ENCODE measurements at regions of chr21 and their contacts with region 1.

Region 1: DNA sequence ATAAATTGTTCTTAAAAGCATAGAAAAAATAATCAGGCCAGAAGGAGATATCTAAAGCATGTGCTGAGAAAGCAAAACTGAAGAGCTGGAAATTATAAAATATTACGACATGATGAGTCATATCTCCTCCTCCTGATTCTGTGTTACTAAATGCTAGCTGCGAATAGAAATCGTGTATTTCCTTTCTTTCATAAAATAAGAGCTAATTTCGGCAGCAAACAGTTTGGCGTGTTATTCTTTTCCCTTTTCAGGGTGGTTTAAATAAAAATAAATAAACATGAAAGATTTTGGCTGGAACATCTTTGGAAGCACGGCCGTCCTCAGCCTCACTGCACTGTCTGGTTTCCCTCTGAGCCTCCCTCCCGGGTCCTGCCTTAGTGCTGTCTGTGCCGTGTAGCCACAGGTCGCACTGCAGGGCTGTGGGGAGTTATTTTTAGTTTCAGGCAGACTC is 56.0 kb downstream of the ADARB1 start:
- DNase-seq: peak in 2 of 3 donors; percentile 31 to 54
- H3K4me3 ChIP-seq: peak overlapping the region in 2 of 7 experiments; percentile 25 to 35
- H3K27ac ChIP-seq: no peak overlapping the region
- H3K4me1 ChIP-seq: peaks cover 4 to 28% (median 20%) of the 10 kb centered on the region in 4 experiments
- H3K27me3 ChIP-seq: peaks cover 0 to 1% (median 0%) of the 10 kb centered on the region in 5 experiments

Region 2: DNA sequence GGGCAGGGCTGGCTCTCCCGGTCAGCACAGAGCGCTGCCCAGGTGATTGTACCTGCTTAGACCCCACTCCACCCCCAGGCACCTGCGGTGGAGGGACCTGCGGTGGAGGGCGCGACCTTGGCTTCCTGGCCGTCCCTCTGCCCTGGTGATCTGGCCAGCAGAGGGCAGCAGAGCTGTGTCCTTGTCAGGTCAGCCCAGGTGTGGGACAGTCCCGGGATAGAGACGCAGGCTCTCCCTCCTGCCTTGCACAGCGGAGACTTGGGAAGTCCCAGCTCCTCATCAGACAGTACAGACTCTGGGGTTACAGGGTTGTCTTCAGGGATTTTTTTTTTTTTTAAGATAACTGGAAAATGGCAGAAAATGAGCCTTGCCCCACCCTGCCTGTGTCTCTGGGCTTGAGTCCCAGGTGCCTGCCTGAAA is 180.6 kb before region 1 on chr21:
- CTCF ChIA-PET with region 1: interaction called, 196 read pairs
- POLR2A ChIA-PET with region 1: no interaction called
- DNase-seq: peak; percentile 59 to 67 (median 64)
- H3K4me3 ChIP-seq: no peak overlapping the region
- H3K27ac ChIP-seq: no peak overlapping the region
- H3K4me1 ChIP-seq: peaks cover 0 to 17% (median 6%) of the 10 kb centered on the region in 4 experiments
- H3K27me3 ChIP-seq: no peaks in the 10 kb centered on the region

Region 3: DNA sequence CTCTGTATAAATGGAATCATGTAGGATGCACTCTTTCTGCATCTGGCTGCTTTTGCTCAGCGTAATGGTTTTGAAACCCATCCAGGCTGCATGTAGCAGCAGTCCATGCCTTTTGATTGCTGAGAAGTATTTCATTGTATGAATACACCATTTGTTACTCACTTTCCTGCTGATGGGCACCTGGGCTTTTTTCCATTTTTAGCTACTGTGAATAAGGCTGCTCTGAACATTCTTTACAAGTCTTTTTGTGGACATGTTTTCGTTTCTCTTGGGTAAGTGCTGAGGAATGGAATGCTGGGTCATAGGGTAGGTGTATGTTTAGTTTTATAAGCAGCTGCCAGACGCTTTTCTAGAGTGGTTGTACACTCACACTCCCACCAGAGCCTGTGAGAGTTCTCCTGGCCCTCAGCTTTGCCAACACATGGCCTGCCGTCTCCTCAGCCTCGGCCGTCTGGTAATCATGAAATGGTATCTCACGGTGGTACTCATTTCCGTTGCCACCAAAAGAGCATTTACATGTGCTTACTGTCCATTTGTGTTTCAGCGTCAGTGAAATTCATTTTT is 167.9 kb before region 1 on chr21:
- CTCF ChIA-PET with region 1: interaction called, 15 read pairs
- POLR2A ChIA-PET with region 1: no interaction called
- DNase-seq: no peak
- H3K4me3 ChIP-seq: no peak overlapping the region
- H3K27ac ChIP-seq: no peak overlapping the region
- H3K4me1 ChIP-seq: peaks cover 0 to 27% (median 25%) of the 10 kb centered on the region in 4 experiments
- H3K27me3 ChIP-seq: no peaks in the 10 kb centered on the region

Region 4: DNA sequence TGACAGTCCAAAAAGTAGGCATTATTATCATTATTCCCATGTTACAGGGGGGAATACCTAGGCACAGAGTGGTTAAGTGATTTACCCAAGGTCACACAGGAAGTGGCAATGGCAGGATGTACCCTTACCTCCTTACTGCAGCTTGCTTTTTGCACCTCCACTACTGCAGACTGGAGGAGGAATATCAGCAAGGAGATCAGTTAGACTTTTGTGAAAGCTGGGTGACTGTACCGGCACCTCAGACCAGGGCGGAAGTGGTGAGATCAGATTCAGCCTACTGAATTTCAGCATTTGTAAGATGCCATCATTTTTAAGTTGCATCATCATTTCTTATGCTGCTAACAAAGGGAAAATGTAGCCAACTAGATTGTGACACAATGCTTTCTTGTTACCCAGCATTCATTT is 51.5 kb before region 1 on chr21:
- CTCF ChIA-PET with region 1: interaction called, 18 read pairs
- POLR2A ChIA-PET with region 1: no interaction called
- DNase-seq: peak in 2 of 3 donors; percentile 35 to 47
- H3K4me3 ChIP-seq: no peak overlapping the region
- H3K27ac ChIP-seq: no peak overlapping the region
- H3K4me1 ChIP-seq: peaks cover 4 to 18% (median 10%) of the 10 kb centered on the region in 4 experiments
- H3K27me3 ChIP-seq: peaks cover 0 to 20% (median 12%) of the 10 kb centered on the region in 5 experiments

Region 5: DNA sequence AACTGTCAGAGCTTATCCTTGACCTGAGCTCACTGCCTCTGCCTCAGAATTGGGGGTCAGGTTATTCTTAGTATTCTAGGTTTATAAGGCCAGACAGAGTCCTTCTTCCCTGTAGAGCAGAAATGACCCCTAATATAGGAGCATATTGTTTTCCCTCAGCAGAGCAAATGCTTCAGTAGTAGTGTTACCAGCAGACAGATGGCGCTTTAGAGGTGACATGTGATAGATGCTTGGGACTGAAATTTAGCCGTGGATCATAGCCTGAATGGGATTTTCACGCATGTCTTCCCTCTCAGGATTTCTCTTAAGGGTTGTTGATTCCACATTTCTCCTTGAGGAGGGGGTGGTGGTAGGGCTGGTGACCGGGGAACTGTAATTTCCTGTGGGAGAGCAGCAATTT is 31.5 kb before region 1 on chr21:
- CTCF ChIA-PET with region 1: interaction called, 149 read pairs
- POLR2A ChIA-PET with region 1: no interaction called
- DNase-seq: peak in 1 of 3 donors; percentile 45
- H3K4me3 ChIP-seq: no peak overlapping the region
- H3K27ac ChIP-seq: no peak overlapping the region
- H3K4me1 ChIP-seq: peaks cover 0 to 6% (median under 1%) of the 10 kb centered on the region in 4 experiments
- H3K27me3 ChIP-seq: peaks cover 0 to 13% (median 2%) of the 10 kb centered on the region in 5 experiments

Region 6: DNA sequence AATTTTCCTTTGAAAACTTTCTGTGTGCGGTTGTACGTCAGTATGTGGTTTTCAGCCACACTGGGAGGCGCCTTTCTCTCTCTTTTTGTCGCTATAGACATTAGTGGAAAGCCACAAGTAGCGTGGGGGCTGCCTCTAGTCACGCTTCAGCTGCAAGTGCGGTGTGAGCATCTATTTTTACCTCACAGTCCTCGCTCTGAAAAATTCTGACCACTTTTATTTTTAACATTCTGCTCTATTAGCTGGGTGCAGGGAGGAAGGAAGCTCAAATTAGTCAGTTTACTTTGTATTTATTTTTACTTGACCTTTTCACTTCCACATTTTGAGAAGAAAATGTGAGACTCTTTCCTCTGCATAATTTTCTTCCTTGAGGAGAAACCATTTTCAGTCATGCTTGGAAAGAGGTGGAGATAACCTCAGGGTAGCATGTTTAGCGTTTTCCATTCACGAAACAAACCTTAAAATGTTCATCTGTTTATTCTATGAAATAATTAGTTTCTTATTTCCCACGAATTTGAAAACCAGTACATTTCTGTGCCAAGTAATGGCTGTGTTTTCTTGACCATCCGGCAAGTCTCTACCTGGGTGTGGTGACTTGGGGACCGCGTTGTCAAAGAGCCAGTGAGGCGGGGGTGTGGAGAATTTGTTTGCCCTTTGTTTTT is 20.4 kb before region 1 on chr21:
- CTCF ChIA-PET with region 1: interaction called, 34 read pairs
- POLR2A ChIA-PET with region 1: no interaction called
- DNase-seq: peak; percentile 68 to 81 (median 76)
- H3K4me3 ChIP-seq: peak overlapping the region in 6 of 7 experiments; percentile 42 to 69 (median 44)
- H3K27ac ChIP-seq: peak overlapping the region in 1 of 2 experiments; percentile 75
- H3K4me1 ChIP-seq: peaks cover 10 to 47% (median 32%) of the 10 kb centered on the region in 4 experiments
- H3K27me3 ChIP-seq: peaks cover 0 to 11% (median 0%) of the 10 kb centered on the region in 5 experiments

Region 7: GRCh38 chr21:45115141-45115540 is 15.2 kb before region 1 on chr21:
- CTCF ChIA-PET with region 1: interaction called, 31 read pairs
- POLR2A ChIA-PET with region 1: no interaction called
- DNase-seq: no peak
- H3K4me3 ChIP-seq: no peak overlapping the region
- H3K27ac ChIP-seq: no peak overlapping the region
- H3K4me1 ChIP-seq: peaks cover 8 to 46% (median 19%) of the 10 kb centered on the region in 4 experiments
- H3K27me3 ChIP-seq: peaks cover 0 to 14% (median 0%) of the 10 kb centered on the region in 5 experiments